ENCODE measurements at regions of chr14 and their contacts with region 1.

Region 1: DNA sequence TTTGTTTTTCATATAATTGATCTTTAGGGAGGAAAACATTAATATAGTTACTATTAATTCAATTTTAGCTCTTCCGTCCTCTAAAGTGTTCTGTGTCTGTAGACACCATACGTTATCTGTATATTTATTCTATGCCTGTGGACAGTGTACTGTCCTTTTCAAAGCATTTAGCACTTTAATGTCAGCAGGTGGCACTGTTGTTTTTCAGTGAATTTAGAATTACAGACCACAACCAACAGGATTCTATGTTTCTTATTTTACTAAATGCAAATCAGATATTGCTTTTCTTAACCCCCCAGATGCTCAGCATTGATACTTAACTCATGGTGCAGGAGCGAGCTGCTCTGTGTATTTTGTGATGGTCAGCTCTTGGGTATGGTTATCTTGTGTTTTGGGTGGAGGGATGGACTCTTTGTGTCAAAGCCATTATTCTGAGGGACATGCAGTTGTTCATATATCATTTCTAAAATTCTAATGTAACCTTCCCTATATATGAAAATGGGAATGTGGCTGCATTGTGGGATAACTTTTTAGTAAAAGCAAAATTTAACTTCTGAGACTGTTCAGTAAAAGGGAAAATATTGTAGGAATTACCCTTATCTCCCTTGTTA is 65.2 kb downstream of the PAPOLA start:
- DNase-seq: peak in 1 of 4 experiments; percentile 40
- ATAC-seq: peak; percentile 95
- H3K4me3 ChIP-seq: no peak overlapping the region
- H3K27ac ChIP-seq: no peak overlapping the region
- H3K4me1 ChIP-seq: no peaks in the 10 kb centered on the region
- H3K27me3 ChIP-seq: no peaks in the 10 kb centered on the region
- CTCF ChIP-seq: peak; percentile 36 to 75 (median 57); a peak in 5 of 6 replicates
- EP300 ChIP-seq: no peak
- POLR2A ChIP-seq: no peak
- RAD21 ChIP-seq: peak; percentile 56 to 76

Region 2: DNA sequence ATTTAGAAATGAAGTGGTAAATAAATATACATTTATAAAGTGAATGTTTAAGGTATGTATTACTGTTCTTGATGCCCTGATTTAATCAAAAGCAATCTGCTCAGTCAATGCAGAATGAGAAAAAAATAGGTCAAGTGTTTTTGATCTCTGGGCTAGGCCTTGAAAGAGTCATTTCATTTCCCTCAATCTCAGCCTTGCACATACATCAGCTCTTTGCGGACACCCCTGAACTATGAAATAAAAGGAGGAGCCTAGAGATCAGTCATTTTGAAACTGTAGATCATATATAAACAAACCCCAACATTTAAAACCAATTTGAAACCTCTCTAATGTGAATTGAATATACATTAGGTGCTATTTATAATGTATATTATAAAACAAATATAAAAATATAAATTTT is 246.8 kb before region 1 on chr14:
- CTCF ChIA-PET with region 1: no interaction called
- POLR2A ChIA-PET with region 1: no interaction called
- in situ Hi-C with region 1: no loop called
- intact Hi-C with region 1: no loop called
- DNase-seq: no peak
- ATAC-seq: no peak
- H3K4me3 ChIP-seq: no peak overlapping the region
- H3K27ac ChIP-seq: no peak overlapping the region
- H3K4me1 ChIP-seq: no peaks in the 10 kb centered on the region
- H3K27me3 ChIP-seq: no peaks in the 10 kb centered on the region
- CTCF ChIP-seq: no peak
- EP300 ChIP-seq: no peak
- POLR2A ChIP-seq: no peak
- RAD21 ChIP-seq: no peak

Region 3: GRCh38 chr14:96847297-96847850 is 280.0 kb after region 1 on chr14:
- CTCF ChIA-PET with region 1: interaction called, 3 read pairs
- POLR2A ChIA-PET with region 1: no interaction called
- in situ Hi-C with region 1: no loop called
- intact Hi-C with region 1: loop called (anchors 10 kb)
- DNase-seq: peak in 1 of 4 experiments; percentile 17
- ATAC-seq: peak; percentile 50; the same call in 1 of the 3 replicates
- H3K4me3 ChIP-seq: no peak overlapping the region
- H3K27ac ChIP-seq: no peak overlapping the region
- H3K4me1 ChIP-seq: peaks cover 0 to 5% of the 10 kb centered on the region in 2 experiments; a peak in 1 of 5 replicates
- H3K27me3 ChIP-seq: no peaks in the 10 kb centered on the region
- CTCF ChIP-seq: peak in 1 of 3 experiments; percentile 20; a peak in 1 of 6 replicates
- EP300 ChIP-seq: no peak
- POLR2A ChIP-seq: no peak
- RAD21 ChIP-seq: peak in 1 of 2 experiments; percentile 13; a peak in 1 of 4 replicates

Measured in K562 (cell line).